ENCODE measurements at regions of chr15 and their contacts with region 1.

Region 1: DNA sequence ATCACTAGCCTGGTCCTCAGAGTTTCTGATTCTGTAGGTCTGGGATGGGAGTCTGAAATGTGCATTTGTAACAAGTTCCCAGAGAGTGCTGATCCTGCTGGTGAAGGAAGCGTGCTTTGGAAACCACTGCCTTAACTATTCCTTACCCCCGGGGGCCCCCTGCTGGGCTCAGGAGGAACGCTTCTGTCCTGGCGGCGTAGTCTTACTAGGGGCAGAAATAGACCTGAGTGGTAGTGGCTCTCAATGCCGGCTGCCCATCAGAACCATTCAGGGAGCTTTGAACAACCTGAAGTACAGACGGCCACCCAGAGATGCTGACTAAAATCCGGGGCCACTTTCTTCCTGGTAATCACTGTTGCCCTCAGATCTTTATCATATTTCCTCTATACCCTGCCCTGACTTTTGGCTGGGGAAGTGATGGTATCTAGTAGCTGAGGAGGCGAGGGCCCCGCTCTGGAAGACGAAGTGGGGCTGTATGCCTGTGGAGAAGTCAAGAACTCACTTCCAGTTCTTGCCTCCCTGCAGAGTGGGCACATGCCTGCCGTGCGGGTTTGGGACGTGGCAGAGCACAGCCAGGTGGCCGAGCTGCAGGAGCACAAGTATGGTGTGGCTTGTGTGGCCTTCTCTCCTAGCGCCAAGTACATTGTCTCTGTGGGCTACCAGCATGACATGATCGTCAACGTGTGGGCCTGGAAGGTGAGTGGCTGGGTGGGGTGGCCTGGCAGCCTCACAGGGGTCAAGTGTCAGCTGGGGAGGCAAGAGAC is 16.3 kb upstream of the JMJD7 start:
- DNase-seq: peak; percentile 95
- H3K4me3 ChIP-seq: no peak overlapping the region
- H3K27ac ChIP-seq: peak overlapping the region in 1 of 4 donors; percentile 31
- H3K4me1 ChIP-seq: peaks cover 8 to 43% (median 21%) of the 10 kb centered on the region in 4 donors
- H3K27me3 ChIP-seq: no peaks in the 10 kb centered on the region
- CTCF ChIP-seq: peak; percentile 89 to 96 (median 93)
- EP300 ChIP-seq: no peak
- POLR2A ChIP-seq: no peak

Region 2: GRCh38 chr15:41512940-41513510 is 298.6 kb before region 1 on chr15:
- intact Hi-C with region 1: no loop called
- DNase-seq: no peak
- H3K4me3 ChIP-seq: peak overlapping the region; percentile 40 to 52 (median 46)
- H3K27ac ChIP-seq: no peak overlapping the region
- H3K4me1 ChIP-seq: peaks cover 28 to 33% (median 29%) of the 10 kb centered on the region in 4 donors
- H3K27me3 ChIP-seq: peaks cover 3 to 42% (median 27%) of the 10 kb centered on the region in 4 donors
- CTCF ChIP-seq: no peak
- EP300 ChIP-seq: no peak
- POLR2A ChIP-seq: no peak

Region 3: GRCh38 chr15:41557673-41558399 is 253.8 kb before region 1 on chr15:
- intact Hi-C with region 1: loop called (anchors 10 kb)
- DNase-seq: no peak
- H3K4me3 ChIP-seq: peak overlapping the region; percentile 61 to 89 (median 78)
- H3K27ac ChIP-seq: peak overlapping the region; percentile 20 to 72 (median 54)
- H3K4me1 ChIP-seq: peaks cover 20 to 46% (median 42%) of the 10 kb centered on the region in 4 donors
- H3K27me3 ChIP-seq: no peaks in the 10 kb centered on the region
- CTCF ChIP-seq: peak; percentile 59 to 76 (median 62)
- EP300 ChIP-seq: no peak
- POLR2A ChIP-seq: no peak

Region 4: GRCh38 chr15:41603941-41604911 is 207.4 kb before region 1 on chr15:
- intact Hi-C with region 1: loop called (anchors 10 kb)
- DNase-seq: no peak
- H3K4me3 ChIP-seq: peak overlapping the region; percentile 31 to 52 (median 38)
- H3K27ac ChIP-seq: peak overlapping the region in 3 of 4 donors; percentile 50 to 61 (median 56)
- H3K4me1 ChIP-seq: peaks cover 10 to 13% (median 11%) of the 10 kb centered on the region in 4 donors
- H3K27me3 ChIP-seq: no peaks in the 10 kb centered on the region
- CTCF ChIP-seq: peak; percentile 70 to 84 (median 73)
- EP300 ChIP-seq: no peak
- POLR2A ChIP-seq: no peak

Region 5: GRCh38 chr15:41772684-41773331 is 38.8 kb before region 1 on chr15:
- intact Hi-C with region 1: loop called (anchors 2 kb)
- DNase-seq: peak; percentile 91
- H3K4me3 ChIP-seq: no peak overlapping the region
- H3K27ac ChIP-seq: peak overlapping the region; percentile 83 to 95 (median 88)
- H3K4me1 ChIP-seq: peaks cover 34 to 49% (median 44%) of the 10 kb centered on the region in 4 donors
- H3K27me3 ChIP-seq: no peaks in the 10 kb centered on the region
- CTCF ChIP-seq: peak; percentile 80 to 91 (median 84)
- EP300 ChIP-seq: no peak
- POLR2A ChIP-seq: no peak

Measured in esophagus muscularis mucosa (tissue), 4 donors.